Activated B cell treated with CpG ODN at 0.5 μM for 24 hours (primary cell): ENCODE measurements at regions of chr15 and their contacts with region 1.

Region 1: GRCh38 chr15:38252481-38253412 is at the start of gene SPRED1:
- DNase-seq: no peak
- ATAC-seq: peak; percentile 11
- H3K4me3 Mint-ChIP-seq: peak within 1 kb of the TSS; percentile 94
- H3K27ac Mint-ChIP-seq: peak within 1 kb of the TSS; percentile 84
- H3K4me1 Mint-ChIP-seq: peaks cover 32% of the 10 kb centered on the region
- H3K27me3 Mint-ChIP-seq: peaks cover 1% of the 10 kb centered on the region
- CTCF ChIP-seq: no peak
- total RNA-seq, gene SPRED1: 1.3 and 1.4 TPM in 2 replicates

Region 2: GRCh38 chr15:37100109-37100965 is 1152.4 kb before region 1 on chr15 and contains the start of gene MEIS2:
- CTCF ChIA-PET with region 1: no interaction called
- POLR2A ChIA-PET with region 1: no interaction called
- intact Hi-C with region 1: loop called (anchors 5 kb)
- DNase-seq: no peak
- ATAC-seq: peak; percentile 31
- H3K4me3 Mint-ChIP-seq: peak within 1 kb of the TSS; percentile 94
- H3K27ac Mint-ChIP-seq: peak within 1 kb of the TSS; percentile 39
- H3K4me1 Mint-ChIP-seq: peaks cover 43% of the 10 kb centered on the region
- H3K27me3 Mint-ChIP-seq: peaks cover 71% of the 10 kb centered on the region
- CTCF ChIP-seq: no peak
- total RNA-seq, gene MEIS2: 0.24 TPM in 1 of 2 replicates, not detected in the other

Region 3: DNA sequence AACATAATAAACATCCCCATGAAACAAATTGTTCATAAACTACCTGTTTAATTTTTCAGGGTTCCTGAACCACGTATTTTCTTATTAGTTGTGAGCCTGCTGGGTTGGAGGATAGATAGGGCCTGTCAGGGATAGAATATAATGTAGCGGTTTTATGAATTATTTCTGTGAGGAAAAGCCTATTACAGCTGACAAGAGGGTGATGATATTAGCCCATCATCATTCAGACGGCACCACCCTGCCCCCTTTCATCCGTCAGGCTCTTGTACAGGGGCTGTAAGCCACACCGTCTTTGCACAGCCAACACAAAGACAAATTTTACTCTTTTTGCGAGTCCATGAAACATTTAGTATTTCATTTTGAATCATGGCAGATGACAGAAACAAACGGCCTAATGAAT is 653.6 kb before region 1 on chr15:
- CTCF ChIA-PET with region 1: no interaction called
- POLR2A ChIA-PET with region 1: no interaction called
- intact Hi-C with region 1: no loop called
- DNase-seq: no peak
- ATAC-seq: no peak
- H3K4me3 Mint-ChIP-seq: no peak overlapping the region
- H3K27ac Mint-ChIP-seq: no peak overlapping the region
- H3K4me1 Mint-ChIP-seq: no peaks in the 10 kb centered on the region
- H3K27me3 Mint-ChIP-seq: no peaks in the 10 kb centered on the region
- CTCF ChIP-seq: no peak

Region 4: GRCh38 chr15:38072348-38073177 is 180.2 kb before region 1 on chr15:
- CTCF ChIA-PET with region 1: no interaction called
- POLR2A ChIA-PET with region 1: interaction called, 8 read pairs
- intact Hi-C with region 1: loop called (anchors 2 kb)
- DNase-seq: peak; percentile 37
- ATAC-seq: peak; percentile 63
- H3K4me3 Mint-ChIP-seq: peak overlapping the region; percentile 86
- H3K27ac Mint-ChIP-seq: peak overlapping the region; percentile 63
- H3K4me1 Mint-ChIP-seq: peaks cover 60% of the 10 kb centered on the region
- H3K27me3 Mint-ChIP-seq: peaks cover 11% of the 10 kb centered on the region
- CTCF ChIP-seq: no peak

Region 5: DNA sequence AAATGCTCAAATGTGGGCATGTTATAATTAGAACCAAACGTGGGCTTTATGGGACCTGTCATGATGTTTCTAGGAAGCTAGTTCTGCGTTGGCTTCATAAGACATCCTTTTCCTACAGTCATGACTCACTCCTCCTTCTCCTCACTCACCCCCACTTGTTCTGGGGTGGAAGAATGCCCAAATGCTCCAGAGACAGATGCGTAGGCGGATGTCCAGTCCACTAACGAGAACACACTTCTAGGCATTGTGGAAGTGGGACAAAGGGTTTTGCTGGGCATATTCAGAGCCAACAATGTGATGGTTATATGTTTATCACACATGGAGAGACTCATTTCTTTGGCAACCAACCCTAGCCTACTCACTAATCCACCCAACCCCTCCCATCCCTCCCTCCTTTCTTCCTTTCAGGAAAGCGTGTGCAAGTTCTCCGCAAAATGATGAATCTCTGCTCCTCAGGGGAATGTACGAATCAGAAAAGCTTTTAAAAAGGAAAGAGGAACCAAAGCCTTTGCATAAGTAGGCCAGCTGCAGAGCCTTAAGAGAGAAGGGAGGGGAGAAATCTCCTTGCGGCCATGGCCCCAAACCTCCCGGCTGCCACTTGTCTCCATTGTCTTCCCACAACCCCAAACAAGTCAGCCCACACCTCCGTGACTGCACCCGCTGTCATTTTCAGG is 123.1 kb before region 1 on chr15:
- CTCF ChIA-PET with region 1: no interaction called
- POLR2A ChIA-PET with region 1: interaction called, 4 read pairs
- intact Hi-C with region 1: loop called (anchors 5 kb)
- DNase-seq: no peak
- ATAC-seq: peak; percentile 77
- H3K4me3 Mint-ChIP-seq: peak overlapping the region; percentile 71
- H3K27ac Mint-ChIP-seq: peak overlapping the region; percentile 1
- H3K4me1 Mint-ChIP-seq: peaks cover 23% of the 10 kb centered on the region
- H3K27me3 Mint-ChIP-seq: no peaks in the 10 kb centered on the region
- CTCF ChIP-seq: no peak

Region 6: GRCh38 chr15:38275959-38276358 is 23.2 kb after region 1 on chr15:
- CTCF ChIA-PET with region 1: no interaction called
- POLR2A ChIA-PET with region 1: no interaction called
- intact Hi-C with region 1: no loop called
- DNase-seq: no peak
- ATAC-seq: no peak
- H3K4me3 Mint-ChIP-seq: no peak overlapping the region
- H3K27ac Mint-ChIP-seq: no peak overlapping the region
- H3K4me1 Mint-ChIP-seq: peaks cover 3% of the 10 kb centered on the region
- H3K27me3 Mint-ChIP-seq: no peaks in the 10 kb centered on the region
- CTCF ChIP-seq: no peak

Region 7: DNA sequence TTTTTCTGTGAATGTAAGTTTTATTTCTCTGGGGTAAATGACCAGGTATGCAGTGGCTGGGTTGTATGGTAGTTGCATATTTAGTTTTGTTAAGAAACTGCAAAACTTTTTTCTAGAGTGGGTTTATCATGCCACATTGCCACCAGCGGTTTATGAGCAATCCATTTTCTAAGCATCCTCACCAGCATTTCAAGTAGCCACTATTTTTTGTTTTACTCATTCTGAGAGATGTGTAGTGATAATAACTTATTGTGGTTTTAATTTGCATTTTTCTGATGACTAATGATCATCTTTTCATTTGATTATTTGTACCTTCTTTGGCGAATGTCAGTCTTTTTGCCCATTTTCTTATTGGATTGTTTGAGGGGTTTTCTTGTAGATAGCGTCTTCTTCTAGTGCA is 56.0 kb after region 1 on chr15:
- CTCF ChIA-PET with region 1: no interaction called
- POLR2A ChIA-PET with region 1: no interaction called
- intact Hi-C with region 1: loop called (anchors 5 kb)
- DNase-seq: no peak
- ATAC-seq: peak; percentile 21
- H3K4me3 Mint-ChIP-seq: no peak overlapping the region
- H3K27ac Mint-ChIP-seq: no peak overlapping the region
- H3K4me1 Mint-ChIP-seq: peaks cover 19% of the 10 kb centered on the region
- H3K27me3 Mint-ChIP-seq: no peaks in the 10 kb centered on the region
- CTCF ChIP-seq: no peak

Region 8: DNA sequence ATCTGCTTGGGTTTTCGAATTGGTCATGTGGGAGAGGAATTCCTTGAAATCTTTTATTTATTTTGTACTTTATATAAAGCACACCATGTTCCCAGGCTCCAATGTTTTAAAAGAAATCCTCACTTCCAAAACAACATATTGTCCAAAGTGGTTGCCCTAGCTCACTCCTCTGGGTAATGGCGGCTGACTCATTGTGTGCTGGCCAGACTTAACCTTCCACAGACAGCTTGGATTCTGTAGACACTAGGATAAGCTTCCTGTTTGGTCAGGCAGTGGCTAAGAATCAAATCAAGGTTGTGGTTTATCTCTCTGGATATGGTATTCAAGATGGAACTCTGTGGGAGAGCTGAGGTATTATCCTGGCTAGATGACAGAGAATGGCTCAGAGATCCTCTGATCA is 145.4 kb after region 1 on chr15:
- CTCF ChIA-PET with region 1: no interaction called
- POLR2A ChIA-PET with region 1: no interaction called
- intact Hi-C with region 1: no loop called
- DNase-seq: no peak
- ATAC-seq: no peak
- H3K4me3 Mint-ChIP-seq: no peak overlapping the region
- H3K27ac Mint-ChIP-seq: no peak overlapping the region
- H3K4me1 Mint-ChIP-seq: no peaks in the 10 kb centered on the region
- H3K27me3 Mint-ChIP-seq: peaks cover 18% of the 10 kb centered on the region
- CTCF ChIP-seq: no peak

Region 9: DNA sequence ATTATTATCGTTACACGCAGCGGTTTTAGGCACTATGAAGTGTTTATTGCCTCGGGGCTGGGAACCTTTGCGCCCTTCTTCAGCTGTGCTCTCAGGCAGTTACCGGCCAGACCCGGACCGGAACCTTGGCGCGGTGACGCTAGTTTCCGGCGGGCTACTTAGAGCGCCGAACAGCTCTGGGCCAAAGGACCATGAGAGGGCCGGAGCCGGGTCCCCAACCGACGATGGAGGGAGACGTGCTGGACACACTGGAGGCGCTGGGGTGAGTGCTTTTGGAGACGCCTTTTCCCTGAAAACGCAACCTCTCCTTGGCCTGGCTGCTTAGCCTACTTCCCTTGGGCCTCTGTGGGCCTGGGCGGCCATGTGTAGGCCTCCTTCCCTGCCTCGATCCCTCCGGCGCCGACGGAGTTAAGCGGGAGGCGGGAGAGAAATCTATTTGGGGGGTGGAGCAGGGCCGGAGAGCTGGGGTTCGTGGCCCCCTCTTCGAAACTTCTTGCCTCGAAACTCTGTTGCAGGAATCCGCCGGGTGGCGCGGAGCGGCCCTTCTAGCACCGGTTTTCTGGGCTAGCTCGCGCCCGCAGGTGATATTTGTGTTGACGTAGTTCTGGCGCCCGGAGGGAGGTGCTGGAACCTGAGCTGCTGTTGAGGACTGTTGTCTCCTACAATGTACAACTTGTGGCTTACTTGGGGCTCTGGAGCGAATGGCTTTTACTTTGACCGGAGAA is 201.4 kb after region 1 on chr15 and contains the start of gene FAM98B:
- CTCF ChIA-PET with region 1: no interaction called
- POLR2A ChIA-PET with region 1: no interaction called
- intact Hi-C with region 1: loop called (anchors 1 kb)
- DNase-seq: peak; percentile 92
- ATAC-seq: peak; percentile 90
- H3K4me3 Mint-ChIP-seq: peak within 1 kb of the TSS; percentile 97
- H3K27ac Mint-ChIP-seq: peak within 1 kb of the TSS; percentile 91
- H3K4me1 Mint-ChIP-seq: peaks cover 35% of the 10 kb centered on the region
- H3K27me3 Mint-ChIP-seq: peaks cover 2% of the 10 kb centered on the region
- CTCF ChIP-seq: no peak
- total RNA-seq, gene FAM98B: 29.9 and 30.7 TPM in 2 replicates

Region 10: DNA sequence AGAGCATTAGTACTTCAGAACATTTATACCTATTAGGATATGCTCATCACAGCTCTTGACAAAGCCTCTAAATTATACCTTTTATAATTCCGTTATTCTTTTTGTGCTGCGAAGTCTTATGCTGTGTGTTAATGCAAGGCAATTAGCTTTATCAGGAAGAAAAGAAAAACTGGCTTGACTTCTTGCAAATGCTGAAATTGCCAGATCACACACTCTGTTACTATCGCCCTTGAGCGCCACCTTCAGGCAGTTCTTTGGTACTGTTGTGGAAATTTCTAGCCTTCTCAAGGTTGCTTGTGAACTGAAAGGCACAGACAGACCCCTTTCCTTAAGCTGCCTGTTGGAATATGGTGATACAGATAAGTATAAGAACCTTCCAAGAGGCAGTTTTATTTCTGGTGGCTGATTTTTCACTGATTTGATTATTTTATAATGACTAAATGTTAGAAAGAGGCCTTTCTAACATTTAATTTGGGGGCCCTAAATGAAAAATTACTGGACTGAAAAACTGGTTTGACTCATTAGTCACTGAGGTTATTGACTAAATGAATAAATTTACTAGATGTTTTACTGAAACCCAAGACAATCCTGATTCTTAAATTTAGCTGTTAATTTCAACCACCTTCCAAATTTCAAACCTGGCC is 438.1 kb after region 1 on chr15:
- CTCF ChIA-PET with region 1: no interaction called
- POLR2A ChIA-PET with region 1: interaction called, 5 read pairs
- intact Hi-C with region 1: loop called (anchors 5 kb)
- DNase-seq: peak; percentile 38
- ATAC-seq: peak; percentile 89
- H3K4me3 Mint-ChIP-seq: no peak overlapping the region
- H3K27ac Mint-ChIP-seq: no peak overlapping the region
- H3K4me1 Mint-ChIP-seq: peaks cover 14% of the 10 kb centered on the region
- H3K27me3 Mint-ChIP-seq: no peaks in the 10 kb centered on the region
- CTCF ChIP-seq: no peak